CD4-positive, alpha-beta memory T cell (primary cell): ENCODE measurements at regions of chr17 and their contacts with region 1.

Region 1: GRCh38 chr17:45161019-45161825 is 453 bp upstream of the HEXIM2 start:
- DNase-seq: peak; percentile 99 to 100 (median 99)
- H3K4me3 ChIP-seq: peak overlapping the region; percentile 72 to 87
- H3K4me3 Mint-ChIP-seq: peak overlapping the region; percentile 85 to 99 (median 98)
- H3K27ac ChIP-seq: peak overlapping the region; percentile 99
- H3K27ac Mint-ChIP-seq: peak overlapping the region; percentile 90 to 100 (median 98)
- H3K4me1 ChIP-seq: peaks cover 33% of the 10 kb centered on the region
- H3K4me1 Mint-ChIP-seq: peaks cover 19 to 52% (median 39%) of the 10 kb centered on the region in 4 donors
- H3K27me3 ChIP-seq: no peaks in the 10 kb centered on the region
- H3K27me3 Mint-ChIP-seq: no peaks in the 10 kb centered on the region

Region 2: GRCh38 chr17:45060797-45061605 is 100.2 kb before region 1 on chr17 and contains the start of gene NMT1:
- CTCF ChIA-PET with region 1: no interaction called
- POLR2A ChIA-PET with region 1: interaction called, 6 read pairs
- intact Hi-C with region 1: loop called (anchors 1 kb)
- DNase-seq: peak; percentile 98 to 99 (median 98)
- H3K4me3 ChIP-seq: peak within 1 kb of the TSS; percentile 80 to 100
- H3K4me3 Mint-ChIP-seq: peak within 1 kb of the TSS; percentile 96 to 100 (median 100)
- H3K27ac ChIP-seq: peak within 1 kb of the TSS; percentile 88
- H3K27ac Mint-ChIP-seq: peak within 1 kb of the TSS; percentile 91 to 100 (median 98)
- H3K4me1 ChIP-seq: peaks cover 42% of the 10 kb centered on the region
- H3K4me1 Mint-ChIP-seq: peaks cover 20 to 64% (median 46%) of the 10 kb centered on the region in 4 donors
- H3K27me3 ChIP-seq: no peaks in the 10 kb centered on the region
- H3K27me3 Mint-ChIP-seq: no peaks in the 10 kb centered on the region
- total RNA-seq, gene NMT1: 125 to 126 TPM

Region 3: GRCh38 chr17:45143104-45143670 is 18.0 kb before region 1 on chr17:
- CTCF ChIA-PET with region 1: interaction called, 552 read pairs
- POLR2A ChIA-PET with region 1: interaction called, 865 read pairs
- intact Hi-C with region 1: loop called (anchors 1 kb)
- DNase-seq: no peak
- H3K4me3 ChIP-seq: no peak overlapping the region
- H3K4me3 Mint-ChIP-seq: peak overlapping the region in 6 of 8 donors; percentile 31 to 68 (median 58)
- H3K27ac ChIP-seq: no peak overlapping the region
- H3K27ac Mint-ChIP-seq: peak overlapping the region in 2 of 7 donors; percentile 68 to 70
- H3K4me1 ChIP-seq: peaks cover 47% of the 10 kb centered on the region
- H3K4me1 Mint-ChIP-seq: peaks cover 15 to 58% (median 35%) of the 10 kb centered on the region in 4 donors
- H3K27me3 ChIP-seq: no peaks in the 10 kb centered on the region
- H3K27me3 Mint-ChIP-seq: peaks cover 0 to 2% of the 10 kb centered on the region in 2 donors

Region 4: DNA sequence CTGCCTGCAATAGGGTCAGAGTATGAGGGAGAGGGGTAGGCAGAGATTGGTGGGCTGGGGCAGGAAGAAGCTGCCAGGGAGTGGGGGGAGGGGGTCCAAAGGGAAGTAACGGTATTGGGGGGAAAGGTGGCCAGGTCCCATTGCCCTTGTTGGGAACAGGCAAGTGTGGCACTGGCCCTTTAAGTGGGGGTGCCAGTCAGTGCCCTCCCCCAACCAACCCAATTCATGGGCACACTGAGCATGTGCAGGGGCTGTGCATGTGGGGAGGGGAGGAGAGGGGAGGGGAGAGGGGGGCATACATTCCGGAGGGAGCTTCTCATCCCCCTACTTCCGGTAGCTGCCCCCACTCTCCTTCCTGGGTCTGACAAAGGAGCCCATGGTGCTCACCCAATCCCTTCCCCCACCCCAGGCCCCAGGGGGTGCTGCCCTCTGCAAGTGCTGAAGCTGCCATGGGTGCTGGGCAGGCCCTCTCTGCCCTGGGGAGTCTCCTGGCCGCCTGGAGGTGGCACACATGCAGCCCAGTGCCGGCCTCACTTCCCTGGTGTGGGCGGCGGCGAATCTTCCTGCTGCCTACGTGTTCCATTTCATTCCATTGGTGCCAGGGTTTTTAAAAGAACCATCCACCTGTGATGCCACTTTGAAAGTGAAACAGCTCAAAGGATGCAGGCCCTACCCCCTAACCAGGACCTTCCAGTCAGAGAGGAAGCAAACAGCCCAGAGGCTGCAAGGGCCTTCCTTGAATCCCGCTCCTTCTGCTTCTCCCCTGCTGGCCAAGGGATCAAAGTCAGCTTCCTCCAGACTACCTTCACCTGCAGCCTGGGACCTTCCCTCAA is 11.4 kb after region 1 on chr17:
- CTCF ChIA-PET with region 1: interaction called, 7 read pairs
- POLR2A ChIA-PET with region 1: interaction called, 65 read pairs
- intact Hi-C with region 1: loop called (anchors 1 kb)
- DNase-seq: peak; percentile 21 to 44 (median 35)
- H3K4me3 ChIP-seq: peak overlapping the region; percentile 11 to 46
- H3K4me3 Mint-ChIP-seq: peak overlapping the region; percentile 69 to 87 (median 79)
- H3K27ac ChIP-seq: peak overlapping the region; percentile 17
- H3K27ac Mint-ChIP-seq: peak overlapping the region; percentile 43 to 91 (median 87)
- H3K4me1 ChIP-seq: peaks cover 16% of the 10 kb centered on the region
- H3K4me1 Mint-ChIP-seq: peaks cover 5 to 17% (median 12%) of the 10 kb centered on the region in 4 donors
- H3K27me3 ChIP-seq: no peaks in the 10 kb centered on the region
- H3K27me3 Mint-ChIP-seq: no peaks in the 10 kb centered on the region

Region 5: DNA sequence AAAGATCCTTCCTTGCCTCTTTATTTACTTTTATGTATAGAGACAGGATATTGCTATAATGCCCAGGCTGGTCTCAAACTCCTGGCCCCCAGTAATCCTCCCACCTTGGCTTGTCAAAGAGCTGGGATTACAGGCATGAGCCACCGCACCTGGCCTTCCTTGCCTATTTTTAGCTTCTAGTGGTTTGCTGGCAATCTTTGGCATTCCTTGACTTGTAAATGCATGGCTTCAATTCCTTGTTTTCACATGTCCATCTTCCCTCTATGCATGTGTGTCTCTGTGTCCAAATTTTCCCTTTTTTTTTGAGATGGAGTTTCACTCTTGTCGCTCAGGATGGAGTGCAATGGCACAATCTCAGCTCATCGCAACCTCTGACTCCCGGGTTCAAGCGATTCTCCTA is 22.9 kb after region 1 on chr17:
- CTCF ChIA-PET with region 1: no interaction called
- POLR2A ChIA-PET with region 1: no interaction called
- intact Hi-C with region 1: no loop called
- DNase-seq: no peak
- H3K4me3 ChIP-seq: no peak overlapping the region
- H3K4me3 Mint-ChIP-seq: no peak overlapping the region
- H3K27ac ChIP-seq: no peak overlapping the region
- H3K27ac Mint-ChIP-seq: no peak overlapping the region
- H3K4me1 ChIP-seq: no peaks in the 10 kb centered on the region
- H3K4me1 Mint-ChIP-seq: no peaks in the 10 kb centered on the region
- H3K27me3 ChIP-seq: no peaks in the 10 kb centered on the region
- H3K27me3 Mint-ChIP-seq: no peaks in the 10 kb centered on the region

Region 6: DNA sequence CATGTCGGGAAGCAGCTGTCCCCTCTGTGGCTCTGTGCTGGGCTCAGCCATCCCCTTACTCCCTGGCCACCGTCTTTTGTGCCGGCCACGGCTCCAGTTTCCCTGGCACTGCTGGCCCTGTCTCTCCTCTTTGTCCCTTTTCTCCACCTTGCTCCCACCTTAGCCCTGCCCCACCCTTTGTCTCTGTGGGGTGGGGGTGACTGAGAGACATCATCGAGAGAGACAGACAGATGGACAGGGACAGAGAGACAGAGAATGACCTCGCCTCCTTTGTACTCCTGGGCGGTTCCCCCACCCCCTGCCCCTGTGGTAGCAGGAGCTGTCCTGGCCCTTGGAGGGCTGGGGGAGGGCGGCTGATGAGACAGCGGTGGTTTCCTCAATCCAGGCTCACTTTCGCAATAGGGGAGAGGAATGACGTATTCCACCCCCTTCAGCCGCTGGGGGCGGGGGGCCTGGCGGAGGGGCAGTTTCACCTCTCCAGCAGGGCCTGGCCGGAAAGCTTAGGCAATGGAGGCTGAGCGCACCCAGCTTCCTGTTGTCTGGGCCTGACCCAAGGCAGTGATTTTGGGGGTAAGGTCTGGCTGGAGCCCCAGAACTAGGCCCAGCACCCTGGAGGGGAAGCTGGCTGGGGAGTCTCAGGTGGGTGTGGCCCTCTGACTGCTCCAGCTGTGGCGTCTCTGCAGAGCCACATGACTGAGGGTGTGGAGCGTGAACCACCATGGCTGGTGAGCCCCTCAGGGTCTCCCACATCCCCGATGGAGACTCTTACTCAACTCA is 67.7 kb after region 1 on chr17:
- CTCF ChIA-PET with region 1: no interaction called
- POLR2A ChIA-PET with region 1: interaction called, 44 read pairs
- intact Hi-C with region 1: no loop called
- DNase-seq: peak; percentile 78 to 97 (median 84)
- H3K4me3 ChIP-seq: peak overlapping the region; percentile 43 to 74
- H3K4me3 Mint-ChIP-seq: peak overlapping the region; percentile 96 to 100 (median 99)
- H3K27ac ChIP-seq: peak overlapping the region; percentile 97
- H3K27ac Mint-ChIP-seq: peak overlapping the region; percentile 99 to 100 (median 100)
- H3K4me1 ChIP-seq: peaks cover 95% of the 10 kb centered on the region
- H3K4me1 Mint-ChIP-seq: peaks cover 48 to 99% (median 69%) of the 10 kb centered on the region in 4 donors
- H3K27me3 ChIP-seq: no peaks in the 10 kb centered on the region
- H3K27me3 Mint-ChIP-seq: no peaks in the 10 kb centered on the region

Region 7: GRCh38 chr17:45307290-45308015 is 146.2 kb after region 1 on chr17:
- CTCF ChIA-PET with region 1: no interaction called
- POLR2A ChIA-PET with region 1: interaction called, 6 read pairs
- intact Hi-C with region 1: loop called (anchors 5 kb)
- DNase-seq: peak in 3 of 5 donors; percentile 29 to 69 (median 35)
- H3K4me3 ChIP-seq: no peak overlapping the region
- H3K4me3 Mint-ChIP-seq: peak overlapping the region in 7 of 8 donors; percentile 21 to 68 (median 57)
- H3K27ac ChIP-seq: peak overlapping the region; percentile 43
- H3K27ac Mint-ChIP-seq: peak overlapping the region; percentile 66 to 91 (median 86)
- H3K4me1 ChIP-seq: peaks cover 94% of the 10 kb centered on the region
- H3K4me1 Mint-ChIP-seq: peaks cover 58 to 91% (median 73%) of the 10 kb centered on the region in 4 donors
- H3K27me3 ChIP-seq: no peaks in the 10 kb centered on the region
- H3K27me3 Mint-ChIP-seq: no peaks in the 10 kb centered on the region